Vagina (tissue), 2 donors: ENCODE measurements at regions of chr4 and their contacts with region 1.

Region 1: DNA sequence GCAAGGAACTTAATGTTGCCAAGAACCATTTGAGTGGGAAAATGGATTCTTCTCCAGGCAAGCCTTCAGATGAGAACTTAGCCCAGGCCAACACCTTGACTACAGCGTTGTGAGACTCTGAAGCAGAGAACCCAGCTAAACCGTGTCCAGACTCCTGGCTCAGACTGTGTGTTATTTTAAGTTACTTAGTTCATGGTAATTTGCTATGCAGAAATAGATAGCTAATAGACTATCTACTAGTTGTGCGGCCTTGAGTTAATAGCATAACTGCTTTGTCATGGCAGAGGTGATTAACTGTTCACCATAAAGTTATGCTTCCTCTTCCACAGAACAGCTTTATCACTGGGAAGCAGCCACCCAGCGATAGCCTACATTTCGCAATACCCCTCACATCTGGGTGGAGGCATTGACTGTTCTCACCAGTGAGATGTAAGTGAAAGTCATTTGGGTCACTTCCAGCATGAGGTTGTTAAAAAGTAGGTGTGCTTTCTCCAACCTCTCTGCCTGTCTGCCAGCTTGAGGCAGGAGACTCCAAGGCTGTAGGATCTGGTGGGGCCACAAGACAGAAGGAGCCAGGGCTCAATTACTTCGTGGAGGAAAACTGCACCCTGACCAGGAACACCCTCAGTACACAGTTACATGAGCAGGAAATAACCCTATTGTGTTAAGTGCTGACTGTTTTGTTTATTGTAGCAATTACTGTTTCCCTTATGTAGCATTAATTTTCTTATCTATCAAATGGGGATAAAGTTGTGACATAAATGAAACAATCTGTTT is 94.2 kb downstream of the GPAT3 start:
- DNase-seq: no peak
- H3K4me3 ChIP-seq: no peak overlapping the region
- H3K27ac ChIP-seq: no peak overlapping the region
- H3K4me1 ChIP-seq: peaks cover 8% of the 10 kb centered on the region
- H3K27me3 ChIP-seq: no peaks in the 10 kb centered on the region
- CTCF ChIP-seq: no peak
- POLR2A ChIP-seq: no peak

Region 2: DNA sequence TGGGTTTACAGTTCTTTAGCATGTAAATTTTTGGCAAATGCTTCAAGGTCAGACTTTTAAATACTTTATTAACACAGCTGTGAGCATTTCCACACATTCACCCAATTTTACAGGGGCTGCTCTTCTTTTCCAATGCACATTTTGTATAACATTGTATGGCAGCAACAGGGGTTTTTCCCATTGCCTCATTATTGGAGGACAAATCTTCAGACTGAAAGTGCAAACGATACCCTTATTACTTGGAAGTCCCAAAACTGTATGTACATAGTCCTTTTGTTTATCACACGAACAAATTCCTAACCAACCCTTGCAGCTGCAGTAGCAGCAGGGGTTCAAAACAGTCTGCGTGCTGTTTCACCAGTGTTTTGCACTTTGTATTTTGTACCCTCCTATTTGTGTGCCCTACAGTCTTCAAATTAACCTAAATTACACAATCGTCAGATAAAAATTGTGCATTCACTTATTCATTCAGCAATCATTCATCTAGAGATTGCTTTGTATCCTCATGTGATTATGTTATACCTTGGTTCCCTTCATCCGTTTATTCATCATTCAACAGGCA is 1827.8 kb before region 1 on chr4:
- intact Hi-C with region 1: no loop called
- DNase-seq: no peak
- H3K4me3 ChIP-seq: no peak overlapping the region
- H3K27ac ChIP-seq: no peak overlapping the region
- H3K4me1 ChIP-seq: no peaks in the 10 kb centered on the region
- H3K27me3 ChIP-seq: no peaks in the 10 kb centered on the region
- CTCF ChIP-seq: no peak
- POLR2A ChIP-seq: no peak

Region 3: GRCh38 chr4:82930848-82931755 is 699.0 kb before region 1 on chr4:
- intact Hi-C with region 1: loop called (anchors 5 kb)
- DNase-seq: no peak
- H3K4me3 ChIP-seq: no peak overlapping the region
- H3K27ac ChIP-seq: no peak overlapping the region
- H3K4me1 ChIP-seq: no peaks in the 10 kb centered on the region
- H3K27me3 ChIP-seq: no peaks in the 10 kb centered on the region
- CTCF ChIP-seq: no peak
- POLR2A ChIP-seq: no peak

Region 4: GRCh38 chr4:83723609-83724008 is 93.5 kb after region 1 on chr4:
- intact Hi-C with region 1: no loop called
- DNase-seq: no peak
- H3K4me3 ChIP-seq: no peak overlapping the region
- H3K27ac ChIP-seq: no peak overlapping the region
- H3K4me1 ChIP-seq: no peaks in the 10 kb centered on the region
- H3K27me3 ChIP-seq: no peaks in the 10 kb centered on the region
- CTCF ChIP-seq: no peak
- POLR2A ChIP-seq: no peak